GM18951 (cell line): ENCODE measurements at regions of chr2 and their contacts with region 1.

Region 1: DNA sequence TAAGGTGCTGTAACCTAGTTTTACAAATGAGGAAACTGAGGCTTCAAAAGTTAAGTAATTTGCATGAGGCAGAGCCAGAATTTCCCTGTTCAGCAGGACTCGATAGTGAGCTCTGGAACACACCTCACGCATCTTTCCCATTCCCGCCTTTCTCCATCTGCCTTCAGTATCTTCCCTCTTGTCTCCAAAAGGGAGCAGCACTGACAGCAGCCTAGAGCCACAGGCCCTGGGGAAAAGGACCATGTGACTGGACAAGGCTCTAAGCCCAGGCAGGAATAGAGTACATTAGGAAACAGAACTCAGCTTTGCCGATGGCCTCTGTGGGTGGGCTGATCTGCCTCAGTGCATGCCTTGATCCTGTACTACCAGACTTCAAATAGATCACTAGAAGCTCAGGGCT is 21.5 kb downstream of the GPR155 start:
- POLR2A ChIP-seq: no peak

Region 2: GRCh38 chr2:174522553-174522952 is 57.2 kb after region 1 on chr2:
- in situ Hi-C with region 1: loop called (anchors 10 kb)
- POLR2A ChIP-seq: no peak

Region 3: GRCh38 chr2:174561283-174561971 is 96.1 kb after region 1 on chr2:
- in situ Hi-C with region 1: no loop called
- POLR2A ChIP-seq: no peak